OCI-LY7 (cell line): ENCODE measurements at regions of chr6 and their contacts with region 1.

Region 1: GRCh38 chr6:128725271-128726233 is 157.4 kb upstream of the LAMA2 start:
- DNase-seq: peak; percentile 20
- H3K4me3 ChIP-seq: no peak overlapping the region
- H3K27ac ChIP-seq: no peak overlapping the region
- H3K4me1 ChIP-seq: no peaks in the 10 kb centered on the region
- CTCF ChIP-seq: peak; percentile 86

Region 2: GRCh38 chr6:129251669-129252376 is 526.3 kb after region 1 on chr6:
- CTCF ChIA-PET with region 1: no interaction called
- POLR2A ChIA-PET with region 1: no interaction called
- intact Hi-C with region 1: loop called (anchors 5 kb)
- DNase-seq: peak; percentile 53
- H3K4me3 ChIP-seq: no peak overlapping the region
- H3K27ac ChIP-seq: no peak overlapping the region
- H3K4me1 ChIP-seq: no peaks in the 10 kb centered on the region
- CTCF ChIP-seq: peak; percentile 89

Region 3: GRCh38 chr6:129370268-129370916 is 644.8 kb after region 1 on chr6:
- CTCF ChIA-PET with region 1: no interaction called
- POLR2A ChIA-PET with region 1: no interaction called
- intact Hi-C with region 1: loop called (anchors 5 kb)
- DNase-seq: peak; percentile 31
- H3K4me3 ChIP-seq: no peak overlapping the region
- H3K27ac ChIP-seq: no peak overlapping the region
- H3K4me1 ChIP-seq: no peaks in the 10 kb centered on the region
- CTCF ChIP-seq: peak; percentile 91